CD14-positive monocyte (primary cell): ENCODE measurements at regions of chr1 and their contacts with region 1.

Region 1: GRCh38 chr1:156601122-156601830 is at the start of gene GPATCH4:
- DNase-seq: peak; percentile 63 to 81 (median 70)
- H3K4me3 ChIP-seq: peak within 1 kb of the TSS; percentile 85 to 90 (median 85)
- H3K4me3 Mint-ChIP-seq: peak within 1 kb of the TSS; percentile 98 to 100
- H3K27ac ChIP-seq: peak within 1 kb of the TSS; percentile 2 to 68
- H3K27ac Mint-ChIP-seq: peak within 1 kb of the TSS; percentile 72 to 97 (median 91)
- H3K4me1 ChIP-seq: peaks cover 23 to 26% of the 10 kb centered on the region in 2 donors
- H3K4me1 Mint-ChIP-seq: peaks cover 26% of the 10 kb centered on the region
- H3K27me3 ChIP-seq: no peaks in the 10 kb centered on the region
- H3K27me3 Mint-ChIP-seq: peaks cover 0 to 2% (median 2%) of the 10 kb centered on the region in 3 donors
- CTCF ChIP-seq: no peak
- polyA plus RNA-seq, gene GPATCH4: 2.6 to 5.3 (median 4.9) TPM

Region 2: DNA sequence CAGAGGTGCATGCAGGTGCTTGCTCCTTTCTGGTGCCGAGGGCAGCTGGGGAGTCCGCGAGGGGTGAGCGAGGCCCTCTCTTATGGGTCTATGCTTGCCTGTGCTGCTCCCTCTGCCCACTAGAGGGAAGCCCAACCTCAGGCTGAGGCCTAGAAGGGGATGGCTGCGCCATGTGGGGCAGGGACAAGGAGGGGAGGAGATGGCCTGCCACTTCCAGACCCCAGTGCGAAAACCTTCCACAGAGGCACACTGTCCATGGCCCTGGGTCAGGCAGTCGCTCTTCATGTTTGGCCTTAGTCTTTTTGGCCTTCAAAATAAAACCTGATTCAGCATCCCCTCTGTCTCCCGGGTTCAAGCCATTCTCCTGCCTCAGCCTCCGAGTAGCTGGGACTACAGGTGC is 218.3 kb before region 1 on chr1:
- intact Hi-C with region 1: loop called (anchors 5 to 10 kb)
- DNase-seq: peak in 2 of 3 donors; percentile 49 to 57
- H3K4me3 ChIP-seq: no peak overlapping the region
- H3K4me3 Mint-ChIP-seq: no peak overlapping the region
- H3K27ac ChIP-seq: no peak overlapping the region
- H3K27ac Mint-ChIP-seq: no peak overlapping the region
- H3K4me1 ChIP-seq: peaks cover 9% of the 10 kb centered on the region in 2 donors
- H3K4me1 Mint-ChIP-seq: peaks cover 14% of the 10 kb centered on the region
- H3K27me3 ChIP-seq: peaks cover 13 to 20% of the 10 kb centered on the region in 2 donors
- H3K27me3 Mint-ChIP-seq: peaks cover 23 to 29% (median 25%) of the 10 kb centered on the region in 3 donors
- CTCF ChIP-seq: peak; percentile 90

Region 3: DNA sequence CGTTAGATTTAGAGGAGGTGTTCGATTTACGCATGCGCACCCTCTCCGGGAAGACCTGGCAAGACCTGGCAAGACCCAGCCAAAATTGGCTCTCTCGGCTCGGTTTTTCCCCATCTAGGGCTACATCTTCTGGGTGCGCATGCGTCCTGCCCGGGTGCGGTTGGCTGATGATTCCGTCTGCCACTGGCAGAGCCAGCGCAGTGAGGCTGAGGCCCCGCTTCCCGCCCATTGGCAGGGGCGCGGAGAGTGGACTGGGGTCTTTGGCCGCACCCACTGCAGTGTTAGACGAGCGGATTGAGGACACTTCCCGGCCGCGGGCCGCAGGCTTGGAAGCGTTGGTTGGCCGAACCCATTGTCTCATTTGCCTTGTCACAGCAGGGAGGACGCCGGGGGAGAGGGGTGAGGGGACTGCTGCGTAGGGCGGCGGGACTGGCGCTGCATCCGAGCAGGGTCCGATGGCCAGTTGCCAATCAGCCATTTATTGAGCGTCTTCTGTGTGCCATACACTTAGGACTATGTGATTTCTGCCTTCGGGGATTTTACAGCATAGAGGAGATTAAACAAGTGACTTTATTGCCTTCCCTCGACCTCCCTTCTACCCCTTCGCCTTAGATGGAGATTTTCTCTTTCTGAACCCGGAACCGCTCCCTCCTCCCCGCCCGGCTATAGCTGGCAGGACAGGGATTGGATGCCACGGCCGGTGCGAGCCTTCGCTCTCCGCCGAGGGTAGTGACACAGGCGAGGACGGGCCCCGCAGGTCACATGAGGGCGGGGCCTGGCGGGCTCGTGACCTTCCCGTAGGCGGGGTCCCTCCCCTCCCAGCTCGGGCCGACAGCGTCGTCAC is 144.4 kb before region 1 on chr1:
- intact Hi-C with region 1: loop called in 1 of 2 experiments (anchors 10 kb)
- DNase-seq: peak; percentile 98 to 99 (median 99)
- H3K4me3 ChIP-seq: peak overlapping the region; percentile 63 to 89 (median 78)
- H3K4me3 Mint-ChIP-seq: peak overlapping the region; percentile 85 to 92
- H3K27ac ChIP-seq: peak overlapping the region; percentile 99
- H3K27ac Mint-ChIP-seq: peak overlapping the region; percentile 99 to 100 (median 99)
- H3K4me1 ChIP-seq: peaks cover 37 to 46% of the 10 kb centered on the region in 2 donors
- H3K4me1 Mint-ChIP-seq: peaks cover 45% of the 10 kb centered on the region
- H3K27me3 ChIP-seq: no peaks in the 10 kb centered on the region
- H3K27me3 Mint-ChIP-seq: peaks cover 0 to 4% (median 0%) of the 10 kb centered on the region in 3 donors
- CTCF ChIP-seq: no peak

Region 4: GRCh38 chr1:156480411-156481192 is 120.7 kb before region 1 on chr1:
- intact Hi-C with region 1: loop called (anchors 5 kb)
- DNase-seq: peak; percentile 60 to 73 (median 64)
- H3K4me3 ChIP-seq: no peak overlapping the region
- H3K4me3 Mint-ChIP-seq: peak overlapping the region; percentile 35 to 47
- H3K27ac ChIP-seq: peak overlapping the region; percentile 9 to 67
- H3K27ac Mint-ChIP-seq: peak overlapping the region; percentile 82 to 92 (median 89)
- H3K4me1 ChIP-seq: peaks cover 41 to 52% of the 10 kb centered on the region in 2 donors
- H3K4me1 Mint-ChIP-seq: peaks cover 60% of the 10 kb centered on the region
- H3K27me3 ChIP-seq: no peaks in the 10 kb centered on the region
- H3K27me3 Mint-ChIP-seq: peaks cover 0 to 2% (median 1%) of the 10 kb centered on the region in 3 donors
- CTCF ChIP-seq: peak; percentile 85

Region 5: DNA sequence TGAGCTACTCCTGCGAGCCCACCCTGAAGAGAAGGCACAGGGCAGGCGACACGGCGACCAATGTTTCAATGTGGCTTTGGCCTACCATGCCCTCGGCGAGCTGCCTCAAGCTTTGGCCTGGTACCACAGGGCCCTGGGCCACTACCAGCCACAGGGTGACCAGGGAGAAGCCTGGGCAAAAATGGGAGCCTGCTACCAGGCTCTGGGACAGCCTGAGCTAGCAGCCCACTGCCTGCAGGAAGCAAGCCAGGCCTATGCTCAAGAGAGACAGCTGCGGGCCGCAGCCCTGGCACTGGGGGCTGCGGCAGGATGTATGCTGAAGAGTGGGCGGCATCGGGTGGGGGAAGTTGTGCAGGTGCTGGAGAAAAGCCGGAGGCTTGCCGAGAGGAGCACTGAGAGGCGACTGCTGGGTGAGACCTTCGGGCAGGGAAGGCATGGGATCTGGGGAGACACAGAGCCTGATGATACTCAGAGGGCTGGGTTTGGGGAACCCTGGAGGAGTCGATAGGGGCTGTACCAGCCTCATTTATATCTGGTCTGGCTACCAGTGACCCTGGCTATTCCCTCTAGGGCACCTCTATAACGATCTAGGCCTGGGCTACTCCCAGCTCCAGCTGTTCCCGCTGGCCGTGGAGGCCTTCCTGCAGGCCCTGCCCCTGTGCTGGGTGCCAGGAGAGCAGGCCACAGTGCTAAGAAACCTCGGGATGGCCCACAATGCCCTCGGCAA is 19.5 kb before region 1 on chr1:
- intact Hi-C with region 1: no loop called
- DNase-seq: no peak
- H3K4me3 ChIP-seq: peak overlapping the region in 1 of 3 experiments; percentile 46
- H3K4me3 Mint-ChIP-seq: peak overlapping the region; percentile 64 to 80
- H3K27ac ChIP-seq: peak overlapping the region; percentile 13 to 51
- H3K27ac Mint-ChIP-seq: peak overlapping the region in 3 of 7 donors; percentile 38 to 80 (median 61)
- H3K4me1 ChIP-seq: peaks cover 16 to 20% of the 10 kb centered on the region in 2 donors
- H3K4me1 Mint-ChIP-seq: peaks cover 28% of the 10 kb centered on the region
- H3K27me3 ChIP-seq: no peaks in the 10 kb centered on the region
- H3K27me3 Mint-ChIP-seq: peaks cover under 1 to 6% (median 2%) of the 10 kb centered on the region in 3 donors
- CTCF ChIP-seq: no peak